Activated T-helper 2 cell treated with anti-CD3 and anti-CD28 coated beads, Interferon-gamma antibody, Interleukin-2, Interleukin-4, amounts not matched to agents 10 μg/mL and 5 μg/mL and 100 μg/mL, durations not matched to agents 14 hours and 24 hours and 36 hours (primary cell): ENCODE measurements at regions of chr2 and their contacts with region 1.

Region 1: DNA sequence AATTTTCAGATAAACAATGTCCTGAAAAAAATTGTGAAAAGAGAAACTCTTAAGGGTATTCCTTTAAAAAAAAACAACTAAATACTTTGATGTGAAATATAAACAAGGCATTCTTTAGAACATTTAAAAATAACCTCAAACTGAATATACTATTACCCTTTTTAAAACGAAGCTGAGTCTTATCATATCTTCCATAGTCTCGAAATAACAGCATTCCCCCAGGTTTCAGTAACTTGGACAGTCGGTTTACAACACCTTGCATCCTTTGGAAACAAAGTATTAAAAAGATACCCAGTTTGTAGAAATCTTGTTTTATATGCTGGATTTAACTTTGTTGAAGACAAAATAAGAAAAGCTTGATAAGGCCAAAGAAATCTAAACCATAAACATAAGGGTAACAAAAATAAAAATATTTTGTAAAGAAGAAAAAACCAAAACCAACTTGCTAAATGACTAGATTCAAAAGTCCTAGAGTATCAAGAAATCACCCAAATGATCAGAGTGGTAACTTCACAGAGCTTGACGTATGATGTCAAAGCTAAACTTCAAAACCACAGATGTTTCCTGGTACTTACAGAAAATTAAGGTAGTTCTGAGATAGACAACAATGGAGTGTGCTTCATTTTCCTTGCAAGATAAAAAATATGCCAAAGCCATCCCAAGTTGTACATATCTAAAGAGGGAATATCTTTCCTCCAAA is 107.8 kb downstream of the METTL8 start:
- DNase-seq: no peak
- H3K4me3 Mint-ChIP-seq: peak overlapping the region; percentile 54
- H3K27ac Mint-ChIP-seq: peak overlapping the region; percentile 92
- H3K4me1 Mint-ChIP-seq: peaks cover 44% of the 10 kb centered on the region
- H3K27me3 Mint-ChIP-seq: no peaks in the 10 kb centered on the region

Region 2: DNA sequence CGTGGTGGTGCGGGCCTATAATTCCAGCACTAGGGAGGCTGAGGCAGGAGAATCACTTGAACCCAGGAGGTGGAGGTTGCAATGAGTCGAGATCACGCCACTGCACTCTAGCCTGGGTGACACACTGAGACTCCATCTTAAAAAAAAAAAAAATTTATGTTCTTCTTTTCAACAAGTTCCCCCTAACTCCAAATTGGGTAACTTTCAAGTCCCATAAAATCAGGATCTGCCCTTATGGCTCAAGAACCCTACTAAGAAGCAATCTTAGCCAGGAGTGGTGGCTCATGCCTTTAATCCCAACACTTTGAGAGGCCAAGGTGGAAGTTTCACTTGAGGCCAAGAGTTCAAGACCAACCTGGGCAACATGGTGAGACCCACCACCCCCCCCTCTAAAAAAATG is 135.0 kb before region 1 on chr2:
- intact Hi-C with region 1: no loop called
- DNase-seq: no peak
- H3K4me3 Mint-ChIP-seq: no peak overlapping the region
- H3K27ac Mint-ChIP-seq: no peak overlapping the region
- H3K4me1 Mint-ChIP-seq: peaks cover 2% of the 10 kb centered on the region
- H3K27me3 Mint-ChIP-seq: peaks cover 1% of the 10 kb centered on the region

Region 3: GRCh38 chr2:171307560-171307959 is 18.5 kb before region 1 on chr2:
- intact Hi-C with region 1: no loop called
- DNase-seq: no peak
- H3K4me3 Mint-ChIP-seq: no peak overlapping the region
- H3K27ac Mint-ChIP-seq: no peak overlapping the region
- H3K4me1 Mint-ChIP-seq: peaks cover 4% of the 10 kb centered on the region
- H3K27me3 Mint-ChIP-seq: no peaks in the 10 kb centered on the region

Region 4: GRCh38 chr2:171347591-171348032 is 21.6 kb after region 1 on chr2:
- intact Hi-C with region 1: loop called (anchors 2 kb)
- DNase-seq: no peak
- H3K4me3 Mint-ChIP-seq: no peak overlapping the region
- H3K27ac Mint-ChIP-seq: peak overlapping the region; percentile 11
- H3K4me1 Mint-ChIP-seq: peaks cover 24% of the 10 kb centered on the region
- H3K27me3 Mint-ChIP-seq: no peaks in the 10 kb centered on the region

Region 5: DNA sequence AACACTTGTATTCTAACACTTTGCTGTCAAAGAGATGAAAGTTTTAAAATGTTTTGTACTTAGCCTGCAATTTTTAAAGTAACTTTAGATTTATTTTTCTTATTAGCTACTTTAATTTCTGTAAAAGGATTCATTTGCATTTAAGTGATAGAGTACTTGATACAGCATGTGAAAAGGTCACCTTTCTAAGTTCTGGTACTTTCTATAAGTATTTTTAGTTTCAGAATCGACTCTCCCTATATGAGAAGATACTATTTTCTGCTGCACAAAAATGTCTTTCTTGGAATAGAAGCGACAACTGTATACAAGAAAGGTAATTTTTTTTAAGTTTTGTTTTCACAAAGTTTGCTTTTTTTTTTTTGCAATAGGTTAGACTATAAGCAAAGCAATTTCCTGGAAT is 34.9 kb after region 1 on chr2:
- intact Hi-C with region 1: no loop called
- DNase-seq: no peak
- H3K4me3 Mint-ChIP-seq: no peak overlapping the region
- H3K27ac Mint-ChIP-seq: no peak overlapping the region
- H3K4me1 Mint-ChIP-seq: peaks cover 7% of the 10 kb centered on the region
- H3K27me3 Mint-ChIP-seq: no peaks in the 10 kb centered on the region

Region 6: DNA sequence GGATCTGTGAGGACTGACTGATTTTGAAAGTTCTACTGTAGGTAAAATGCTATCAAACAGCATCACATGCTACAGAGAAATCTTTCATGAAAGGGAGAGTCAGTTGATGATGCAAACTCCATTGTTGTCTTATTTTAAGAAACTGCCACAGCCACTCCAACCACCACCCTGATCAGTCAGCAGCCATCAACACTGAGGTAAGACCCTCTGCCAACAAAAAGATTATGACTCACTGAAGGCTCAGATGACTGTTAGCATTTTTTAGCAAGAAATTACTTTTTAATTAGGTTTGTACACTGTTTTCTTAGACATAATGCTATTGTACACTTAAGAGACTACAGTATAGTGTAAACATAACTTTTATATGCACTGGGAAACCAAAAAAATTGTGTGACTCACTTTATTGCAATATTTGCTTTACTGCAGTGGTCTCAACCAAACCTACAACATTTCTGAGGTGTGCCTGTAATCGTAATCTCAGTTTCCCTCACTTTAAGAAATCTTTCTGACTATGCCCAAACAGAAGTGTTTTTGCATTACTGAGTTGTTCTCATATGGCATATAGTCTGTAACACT is 65.0 kb after region 1 on chr2:
- intact Hi-C with region 1: loop called (anchors 1 kb)
- DNase-seq: peak; percentile 22
- H3K4me3 Mint-ChIP-seq: no peak overlapping the region
- H3K27ac Mint-ChIP-seq: peak overlapping the region; percentile 77
- H3K4me1 Mint-ChIP-seq: peaks cover 39% of the 10 kb centered on the region
- H3K27me3 Mint-ChIP-seq: no peaks in the 10 kb centered on the region

Region 7: GRCh38 chr2:171433763-171434670 is 108.0 kb after region 1 on chr2 and contains the starts of genes DCAF17 and METTL8:
- intact Hi-C with region 1: loop called (anchors 2 kb)
- DNase-seq: peak; percentile 93
- H3K4me3 Mint-ChIP-seq: peak within 1 kb of the TSS; percentile 89
- H3K27ac Mint-ChIP-seq: peak within 1 kb of the TSS; percentile 91
- H3K4me1 Mint-ChIP-seq: peaks cover 32% of the 10 kb centered on the region
- H3K27me3 Mint-ChIP-seq: no peaks in the 10 kb centered on the region
- total RNA-seq, gene DCAF17: 22.6 and 23.7 TPM in 2 replicates
- total RNA-seq, gene METTL8: 38.2 and 39.9 TPM in 2 replicates

Region 8: GRCh38 chr2:171447675-171448074 is 121.6 kb after region 1 on chr2:
- intact Hi-C with region 1: no loop called
- DNase-seq: no peak
- H3K4me3 Mint-ChIP-seq: no peak overlapping the region
- H3K27ac Mint-ChIP-seq: no peak overlapping the region
- H3K4me1 Mint-ChIP-seq: no peaks in the 10 kb centered on the region
- H3K27me3 Mint-ChIP-seq: no peaks in the 10 kb centered on the region